OCI-LY7 (cell line): ENCODE measurements at regions of chr6 and their contacts with region 1.

Region 1: DNA sequence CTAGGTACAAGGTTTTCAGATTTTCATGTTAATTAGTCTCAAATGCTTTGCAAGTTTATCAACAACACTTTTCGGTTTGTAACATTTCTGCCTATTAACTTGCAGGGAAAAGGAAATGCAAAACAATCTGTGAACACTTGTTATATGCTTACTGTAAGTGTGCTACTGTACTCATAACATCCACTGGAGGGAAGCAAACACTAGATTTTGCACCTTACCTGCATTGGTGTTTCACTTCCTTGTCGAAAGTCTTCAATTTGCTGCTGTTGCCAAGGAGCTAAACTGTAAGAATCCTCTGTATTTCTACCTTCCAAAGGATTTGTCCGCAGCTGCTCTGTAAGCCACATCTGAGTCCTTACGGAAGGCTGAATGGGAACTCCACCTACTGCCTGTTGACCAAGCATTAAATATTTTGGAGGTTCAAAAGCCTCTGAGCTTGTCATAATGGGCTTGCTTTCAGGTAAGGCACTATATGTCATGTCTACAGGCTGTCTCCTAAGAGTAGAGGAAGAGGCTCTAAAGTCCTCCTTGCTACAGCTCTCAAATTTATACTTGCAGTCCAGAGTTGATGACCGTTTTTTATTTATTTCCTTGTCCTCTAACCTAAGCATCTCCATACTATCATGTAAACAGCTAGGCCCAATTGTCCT is 17.3 kb downstream of the PLN start:
- DNase-seq: peak; percentile 82
- H3K4me3 ChIP-seq: no peak overlapping the region
- H3K27ac ChIP-seq: no peak overlapping the region
- H3K4me1 ChIP-seq: peaks cover 4% of the 10 kb centered on the region
- CTCF ChIP-seq: peak; percentile 88

Region 2: GRCh38 chr6:118580585-118581419 is 15.4 kb after region 1 on chr6:
- CTCF ChIA-PET with region 1: interaction called, 5 read pairs
- POLR2A ChIA-PET with region 1: interaction called, 3 read pairs
- intact Hi-C with region 1: loop called (anchors 1 kb)
- DNase-seq: peak; percentile 74
- H3K4me3 ChIP-seq: no peak overlapping the region
- H3K27ac ChIP-seq: no peak overlapping the region
- H3K4me1 ChIP-seq: no peaks in the 10 kb centered on the region
- CTCF ChIP-seq: peak; percentile 89

Region 3: GRCh38 chr6:118618679-118619377 is 53.4 kb after region 1 on chr6:
- CTCF ChIA-PET with region 1: no interaction called
- POLR2A ChIA-PET with region 1: no interaction called
- intact Hi-C with region 1: loop called (anchors 5 kb)
- DNase-seq: peak; percentile 44
- H3K4me3 ChIP-seq: no peak overlapping the region
- H3K27ac ChIP-seq: no peak overlapping the region
- H3K4me1 ChIP-seq: no peaks in the 10 kb centered on the region
- CTCF ChIP-seq: peak; percentile 84

Region 4: DNA sequence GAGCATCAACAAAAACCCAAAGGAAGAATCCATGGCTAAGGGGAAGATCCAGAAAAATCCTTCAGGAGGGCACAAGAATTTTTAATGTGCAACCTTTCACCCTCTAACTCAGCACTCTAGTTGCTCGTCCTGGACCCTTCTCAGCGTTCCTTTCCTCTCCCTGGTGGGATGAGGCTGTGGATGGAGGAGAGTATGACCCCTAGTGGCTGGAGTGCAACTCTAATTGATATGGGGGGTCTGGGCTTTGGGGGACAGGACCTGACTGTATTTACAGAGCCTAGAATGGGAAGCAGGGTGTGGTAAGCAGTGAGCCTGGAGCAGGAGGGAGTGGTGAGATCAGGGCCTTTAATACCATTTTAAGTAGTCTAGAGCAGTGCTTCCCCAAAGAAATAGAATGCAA is 169.9 kb after region 1 on chr6:
- CTCF ChIA-PET with region 1: no interaction called
- POLR2A ChIA-PET with region 1: no interaction called
- intact Hi-C with region 1: loop called (anchors 1 kb)
- DNase-seq: peak; percentile 31
- H3K4me3 ChIP-seq: no peak overlapping the region
- H3K27ac ChIP-seq: no peak overlapping the region
- H3K4me1 ChIP-seq: no peaks in the 10 kb centered on the region
- CTCF ChIP-seq: peak; percentile 80

Region 5: DNA sequence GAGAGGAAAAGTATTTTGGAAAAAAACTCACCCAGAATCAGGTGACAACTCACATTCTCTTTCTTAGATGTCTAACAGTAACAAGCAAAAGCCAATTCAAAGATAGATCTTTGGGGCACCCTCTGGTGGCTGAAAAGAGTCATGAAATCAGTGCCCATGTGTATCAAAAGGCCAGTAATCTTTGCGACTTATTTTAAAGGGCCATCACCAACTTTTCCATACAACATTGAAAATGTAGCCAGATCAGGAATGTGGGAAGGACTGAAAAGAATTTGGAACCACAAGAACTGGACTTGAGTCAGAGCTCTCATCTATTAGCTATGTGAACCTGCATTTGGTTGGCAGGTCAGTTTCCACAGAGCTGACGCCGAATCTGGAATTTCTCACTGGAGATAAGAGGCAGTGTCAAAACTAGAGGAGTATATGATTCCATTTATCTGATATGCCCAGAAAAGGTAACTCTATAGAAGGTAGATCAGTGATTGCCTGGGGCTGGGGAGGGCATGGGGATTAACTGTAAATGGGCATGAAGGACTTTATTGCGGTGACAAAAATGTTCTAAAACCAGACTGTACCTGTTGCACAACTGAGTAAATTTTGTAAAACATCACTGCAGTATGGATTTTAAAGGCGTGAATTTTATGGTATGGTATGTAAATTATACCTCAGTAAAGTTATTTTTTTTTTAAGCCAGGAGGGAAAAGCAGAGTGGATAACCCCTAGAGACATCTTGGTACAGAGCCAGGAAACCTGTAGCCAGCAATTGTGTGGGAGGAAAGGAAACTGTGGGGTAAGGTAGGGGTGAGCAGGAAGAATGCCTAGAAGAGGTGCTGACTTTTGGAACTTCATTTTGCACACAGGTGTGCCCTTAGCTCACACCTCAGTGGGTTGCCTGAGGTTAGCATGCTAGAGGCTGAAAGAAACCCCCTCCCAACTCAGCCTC is 211.4 kb after region 1 on chr6:
- CTCF ChIA-PET with region 1: no interaction called
- POLR2A ChIA-PET with region 1: no interaction called
- intact Hi-C with region 1: loop called (anchors 1 kb)
- DNase-seq: peak; percentile 70
- H3K4me3 ChIP-seq: no peak overlapping the region
- H3K27ac ChIP-seq: no peak overlapping the region
- H3K4me1 ChIP-seq: no peaks in the 10 kb centered on the region
- CTCF ChIP-seq: peak; percentile 95

Region 6: GRCh38 chr6:118800394-118801071 is 235.1 kb after region 1 on chr6:
- CTCF ChIA-PET with region 1: no interaction called
- POLR2A ChIA-PET with region 1: no interaction called
- intact Hi-C with region 1: loop called (anchors 1 kb)
- DNase-seq: peak; percentile 86
- H3K4me3 ChIP-seq: no peak overlapping the region
- H3K27ac ChIP-seq: no peak overlapping the region
- H3K4me1 ChIP-seq: no peaks in the 10 kb centered on the region
- CTCF ChIP-seq: peak; percentile 95

Region 7: DNA sequence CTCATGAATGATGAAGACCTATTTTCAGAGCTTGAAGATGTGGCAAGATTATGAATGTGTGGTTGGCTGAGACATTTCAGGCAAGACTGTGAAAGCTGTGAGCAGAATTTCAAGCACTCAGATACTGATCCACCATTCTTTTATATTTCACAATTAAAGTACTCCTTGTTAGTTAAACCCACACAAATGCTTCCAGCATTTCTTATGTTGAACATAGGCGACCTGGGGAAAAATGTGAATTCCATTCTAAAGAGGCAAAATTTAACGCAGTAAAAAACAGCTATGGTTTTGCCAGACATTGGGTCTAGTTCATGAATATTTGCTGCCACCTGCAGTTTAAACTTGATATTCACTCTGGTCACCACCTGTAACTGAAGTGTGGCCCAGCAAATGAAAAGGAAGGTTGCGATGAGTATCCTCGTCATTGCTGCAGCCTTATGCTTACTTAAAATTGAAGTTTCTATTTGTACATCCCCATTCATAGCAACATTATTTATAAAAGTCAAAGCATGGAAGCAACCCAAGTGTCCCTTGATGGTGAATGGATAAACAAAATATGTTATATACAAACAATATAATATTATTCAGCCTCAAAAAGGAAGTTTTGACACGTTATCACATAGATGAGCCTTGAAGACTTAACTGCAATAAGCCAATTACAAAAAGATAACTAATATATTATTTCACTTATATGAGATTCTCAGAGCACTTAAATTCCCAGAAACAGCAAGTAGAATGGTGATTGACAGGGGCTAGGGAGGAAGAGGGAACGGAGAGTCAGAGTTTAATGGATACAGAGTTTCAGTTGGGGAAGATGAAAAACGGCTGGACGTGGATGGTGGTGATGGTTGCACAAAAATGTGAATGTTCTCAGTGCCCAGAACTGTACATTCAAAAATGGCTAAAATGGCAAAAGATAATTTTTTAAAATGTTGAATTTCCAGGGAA is 545.4 kb after region 1 on chr6:
- CTCF ChIA-PET with region 1: no interaction called
- POLR2A ChIA-PET with region 1: no interaction called
- intact Hi-C with region 1: loop called (anchors 5 kb)
- DNase-seq: peak; percentile 54
- H3K4me3 ChIP-seq: no peak overlapping the region
- H3K27ac ChIP-seq: no peak overlapping the region
- H3K4me1 ChIP-seq: no peaks in the 10 kb centered on the region
- CTCF ChIP-seq: peak; percentile 80